A549 (cell line): ENCODE measurements at regions of chr1 and their contacts with region 1.

Region 1: DNA sequence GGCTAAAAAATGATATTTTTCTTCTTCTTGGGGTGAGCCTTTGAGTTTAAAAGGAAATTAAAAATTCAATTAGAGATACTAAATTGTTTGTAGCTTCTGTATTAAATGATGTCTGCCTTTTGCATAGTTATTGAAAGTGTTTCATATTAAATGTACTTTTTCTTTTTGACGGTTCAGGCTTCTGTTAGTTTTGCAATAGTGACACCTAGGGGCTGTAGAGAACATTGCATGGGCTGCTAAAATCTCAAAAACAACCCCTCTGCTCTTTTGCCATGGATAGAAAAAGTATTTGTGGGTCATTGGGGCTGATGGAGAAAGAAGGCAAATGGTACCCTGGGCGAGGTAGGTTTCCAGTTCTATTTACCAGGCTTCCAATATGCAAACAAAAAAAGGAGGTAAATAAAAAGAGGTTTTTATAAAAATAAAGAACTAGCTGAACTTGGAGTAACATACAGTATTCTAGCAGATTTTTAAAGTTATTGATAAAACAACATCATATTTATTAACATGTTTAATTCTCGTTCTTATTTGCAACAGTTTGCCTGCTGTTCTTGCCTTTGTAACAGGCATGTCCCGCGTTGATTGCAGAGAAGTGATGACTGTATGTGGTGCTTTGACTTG is 115.4 kb upstream of the HOOK1 start:
- DNase-seq: peak; percentile 18 to 30
- ATAC-seq: no peak
- H3K4me3 ChIP-seq: no peak overlapping the region
- H3K27ac ChIP-seq: no peak overlapping the region
- H3K4me1 ChIP-seq: peaks cover 6% of the 10 kb centered on the region; the same call in 1 of the 3 replicates
- CTCF ChIP-seq: peak; percentile 81
- EP300 ChIP-seq: no peak
- POLR2A ChIP-seq: no peak
- RAD21 ChIP-seq: peak; percentile 87 to 89

Region 2: GRCh38 chr1:58739856-58740466 is 959.4 kb before region 1 on chr1:
- CTCF ChIA-PET with region 1: interaction called, 43 read pairs
- POLR2A ChIA-PET with region 1: no interaction called
- DNase-seq: peak; percentile 23 to 35
- ATAC-seq: peak in 1 of 2 experiments; percentile 75; a peak in 4 of 6 replicates
- H3K4me3 ChIP-seq: no peak overlapping the region
- H3K27ac ChIP-seq: no peak overlapping the region
- H3K4me1 ChIP-seq: no peaks in the 10 kb centered on the region
- CTCF ChIP-seq: peak; percentile 83
- EP300 ChIP-seq: no peak
- POLR2A ChIP-seq: no peak
- RAD21 ChIP-seq: peak; percentile 91 to 94

Region 3: GRCh38 chr1:59718064-59718988 is 19.0 kb after region 1 on chr1:
- CTCF ChIA-PET with region 1: interaction called, 17 read pairs
- POLR2A ChIA-PET with region 1: no interaction called
- DNase-seq: no peak
- ATAC-seq: no peak
- H3K4me3 ChIP-seq: no peak overlapping the region
- H3K27ac ChIP-seq: no peak overlapping the region
- H3K4me1 ChIP-seq: no peaks in the 10 kb centered on the region
- CTCF ChIP-seq: peak; percentile 13; the same call in 1 of the 3 replicates
- EP300 ChIP-seq: no peak
- POLR2A ChIP-seq: no peak
- RAD21 ChIP-seq: peak in 1 of 2 experiments; percentile 25; a peak in 1 of 5 replicates